Aorta (tissue), 5 donors: ENCODE measurements at regions of chr7 and their contacts with region 1.

Region 1: DNA sequence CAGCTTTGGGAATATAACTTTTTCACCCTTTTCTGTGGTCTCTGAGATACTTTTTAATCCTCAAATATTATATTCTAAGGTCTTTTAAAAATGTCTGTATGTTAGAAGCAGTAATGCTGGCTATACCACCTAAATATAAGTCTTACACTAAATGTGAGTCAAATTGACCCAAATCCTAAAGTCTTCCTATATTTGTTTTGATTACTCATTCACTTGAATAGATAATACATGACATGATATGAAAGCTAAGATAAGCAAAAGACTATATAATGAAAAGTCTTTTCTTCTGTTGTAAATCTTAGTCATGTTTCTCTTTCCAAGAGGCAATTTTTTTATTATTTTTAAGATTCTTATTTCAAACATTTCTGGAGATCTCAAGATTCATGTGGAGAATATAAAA is 64.2 kb downstream of the HDAC9 start:
- DNase-seq: no peak
- ATAC-seq: no peak
- H3K4me3 ChIP-seq: no peak overlapping the region
- H3K27ac ChIP-seq: no peak overlapping the region
- H3K4me1 ChIP-seq: peaks cover 4 to 6% of the 10 kb centered on the region in 2 donors
- H3K27me3 ChIP-seq: no peaks in the 10 kb centered on the region

Region 2: GRCh38 chr7:18508443-18509427 is 51.0 kb before region 1 on chr7:
- intact Hi-C with region 1: loop called in 1 of 2 experiments (anchors 5 kb)
- DNase-seq: no peak
- ATAC-seq: peak; percentile 81
- H3K4me3 ChIP-seq: peak overlapping the region; percentile 40 to 66
- H3K27ac ChIP-seq: peak overlapping the region; percentile 98 to 99
- H3K4me1 ChIP-seq: peaks cover 0 to 7% of the 10 kb centered on the region in 2 donors
- H3K27me3 ChIP-seq: no peaks in the 10 kb centered on the region

Region 3: GRCh38 chr7:18866359-18867036 is 306.7 kb after region 1 on chr7:
- intact Hi-C with region 1: no loop called
- DNase-seq: peak in 1 of 2 donors; percentile 81
- ATAC-seq: peak; percentile 91
- H3K4me3 ChIP-seq: no peak overlapping the region
- H3K27ac ChIP-seq: no peak overlapping the region
- H3K4me1 ChIP-seq: peaks cover 0 to 4% of the 10 kb centered on the region in 2 donors
- H3K27me3 ChIP-seq: no peaks in the 10 kb centered on the region